Activated CD4-positive, alpha-beta memory T cell treated with anti-CD3 and anti-CD28 coated beads, Interleukin-2, amount 10 ng/mL, durations not matched to agents 7 days and 5 days (primary cell): ENCODE measurements at regions of chr20 and their contacts with region 1.

Region 1: DNA sequence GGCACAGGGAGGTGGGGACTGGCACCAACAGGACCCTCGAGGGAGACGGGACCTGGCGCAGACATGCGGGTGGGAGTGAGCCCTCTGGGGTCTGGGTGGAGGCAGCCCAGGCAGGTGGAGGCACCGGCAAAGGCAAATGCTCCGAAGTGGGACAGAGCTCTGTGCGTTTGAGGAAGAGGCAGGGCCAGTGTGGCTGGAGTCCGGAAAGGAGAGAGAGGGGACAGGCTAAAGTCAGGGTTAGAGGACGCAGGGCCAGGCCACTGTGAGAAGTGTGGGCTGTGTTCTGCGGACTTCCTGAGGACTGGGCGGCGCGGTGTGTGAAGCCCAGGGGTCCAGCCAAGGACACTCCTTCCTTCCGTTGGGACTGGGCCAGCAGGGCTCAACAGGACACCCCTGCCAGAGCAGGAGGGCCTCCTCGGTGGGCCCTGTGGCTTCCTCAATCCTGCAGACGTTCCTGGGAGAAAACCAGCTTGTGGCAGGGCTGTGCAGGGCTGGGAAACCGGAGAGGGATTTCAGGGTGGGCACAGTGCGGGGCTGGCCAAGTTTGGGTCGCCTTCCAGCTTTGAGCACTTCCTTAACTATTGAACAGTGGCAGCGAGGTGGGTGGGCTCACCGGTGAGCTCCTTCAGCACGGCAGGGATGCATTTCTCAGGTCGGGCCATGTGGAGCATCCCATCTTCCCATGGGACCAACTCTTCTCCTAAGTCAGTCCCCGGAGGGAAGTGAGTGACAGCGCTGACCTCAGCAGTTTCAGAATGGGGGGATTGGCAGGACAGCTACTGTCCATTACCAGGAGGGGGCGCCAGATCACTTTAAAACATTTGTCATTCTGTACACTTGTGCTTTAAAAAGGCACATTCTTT is 22.5 kb downstream of the MOCS3 start:
- DNase-seq: peak; percentile 66
- H3K4me3 Mint-ChIP-seq: no peak overlapping the region
- H3K27ac Mint-ChIP-seq: no peak overlapping the region
- H3K4me1 Mint-ChIP-seq: peaks cover 8% of the 10 kb centered on the region
- H3K27me3 Mint-ChIP-seq: peaks cover 22% of the 10 kb centered on the region

Region 2: DNA sequence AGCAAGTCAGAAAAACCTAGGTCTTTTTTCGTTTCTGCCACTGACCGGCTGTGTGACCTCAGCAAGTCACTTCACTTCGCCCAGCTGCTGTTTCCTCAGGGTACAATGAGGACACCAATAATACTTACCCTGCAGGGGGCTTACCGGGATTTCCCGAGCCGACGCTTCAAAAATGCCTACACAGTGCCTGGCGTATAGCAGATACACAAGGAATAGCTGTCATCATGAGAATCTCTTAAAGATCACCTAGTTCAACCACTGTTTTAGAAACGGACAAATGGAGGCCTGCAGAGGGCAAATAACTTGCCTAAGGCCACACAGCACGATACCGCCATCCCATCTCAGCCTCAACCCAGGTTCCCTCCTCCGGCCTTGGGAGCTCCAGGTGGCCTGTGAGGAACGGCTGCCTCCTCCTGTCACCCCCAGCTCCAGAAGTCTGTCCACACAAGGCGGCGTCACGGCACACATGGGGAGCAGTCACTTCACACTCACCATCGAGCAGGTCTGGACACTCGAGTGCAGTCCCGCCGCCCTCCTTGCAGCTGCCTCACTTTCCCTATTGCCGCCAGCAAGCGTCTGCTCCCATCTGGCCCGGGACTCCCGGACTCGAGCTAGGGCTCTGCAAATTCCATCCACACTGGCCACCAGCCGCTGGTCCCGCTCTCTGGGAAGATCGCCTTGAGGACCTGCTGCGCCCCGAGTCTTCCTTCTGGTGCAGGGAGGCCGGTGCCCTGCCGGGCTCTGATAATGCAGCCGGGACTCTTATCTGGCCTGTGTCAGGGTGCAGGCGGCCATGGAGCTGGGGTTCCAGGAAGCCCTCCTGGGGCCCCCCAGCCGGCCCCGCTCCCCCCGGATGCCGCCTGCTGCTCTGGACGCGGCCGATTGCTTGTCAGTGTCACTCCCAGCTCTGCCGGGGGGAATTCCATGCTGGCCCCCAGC is 290.2 kb before region 1 on chr20 and contains the start of gene RIPOR3:
- CTCF ChIA-PET with region 1: no interaction called
- POLR2A ChIA-PET with region 1: no interaction called
- DNase-seq: no peak
- H3K4me3 Mint-ChIP-seq: no peak within 1 kb of the TSS
- H3K27ac Mint-ChIP-seq: no peak within 1 kb of the TSS
- H3K4me1 Mint-ChIP-seq: peaks cover 7% of the 10 kb centered on the region
- H3K27me3 Mint-ChIP-seq: peaks cover 53% of the 10 kb centered on the region
- total RNA-seq, gene RIPOR3: not detected

Region 3: DNA sequence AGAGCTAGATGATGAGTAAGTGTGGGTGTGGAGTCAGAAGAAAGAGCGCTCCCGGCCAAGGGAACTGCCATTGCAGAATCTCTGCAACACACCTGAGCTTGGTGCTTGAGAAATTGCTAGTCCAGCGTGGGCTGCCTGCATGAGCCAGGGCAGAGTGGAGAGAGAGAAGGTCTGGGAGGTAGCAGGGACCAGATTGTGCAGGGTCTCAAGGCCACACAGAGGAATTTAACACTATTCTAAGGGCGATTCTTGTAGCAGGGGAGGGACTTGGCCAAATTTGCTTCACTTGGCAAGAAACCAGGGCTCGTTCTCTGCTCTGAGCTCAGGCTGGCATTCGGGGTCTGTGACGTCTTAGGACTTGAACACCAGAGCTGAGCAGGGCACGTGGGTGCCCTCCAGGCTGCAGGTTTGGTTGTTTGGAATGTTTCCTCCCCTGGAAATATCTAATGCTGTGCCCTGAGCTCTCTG is 132.7 kb before region 1 on chr20:
- CTCF ChIA-PET with region 1: no interaction called
- POLR2A ChIA-PET with region 1: no interaction called
- DNase-seq: no peak
- H3K4me3 Mint-ChIP-seq: no peak overlapping the region
- H3K27ac Mint-ChIP-seq: no peak overlapping the region
- H3K4me1 Mint-ChIP-seq: peaks cover 21% of the 10 kb centered on the region
- H3K27me3 Mint-ChIP-seq: no peaks in the 10 kb centered on the region

Region 4: GRCh38 chr20:50992733-50993457 is 11.8 kb after region 1 on chr20:
- CTCF ChIA-PET with region 1: interaction called, 19 read pairs
- POLR2A ChIA-PET with region 1: no interaction called
- DNase-seq: peak; percentile 51
- H3K4me3 Mint-ChIP-seq: no peak overlapping the region
- H3K27ac Mint-ChIP-seq: no peak overlapping the region
- H3K4me1 Mint-ChIP-seq: no peaks in the 10 kb centered on the region
- H3K27me3 Mint-ChIP-seq: peaks cover 4% of the 10 kb centered on the region

Region 5: GRCh38 chr20:51059862-51060261 is 78.8 kb after region 1 on chr20:
- CTCF ChIA-PET with region 1: no interaction called
- POLR2A ChIA-PET with region 1: no interaction called
- DNase-seq: no peak
- H3K4me3 Mint-ChIP-seq: no peak overlapping the region
- H3K27ac Mint-ChIP-seq: no peak overlapping the region
- H3K4me1 Mint-ChIP-seq: peaks cover 8% of the 10 kb centered on the region
- H3K27me3 Mint-ChIP-seq: peaks cover 30% of the 10 kb centered on the region

Region 6: DNA sequence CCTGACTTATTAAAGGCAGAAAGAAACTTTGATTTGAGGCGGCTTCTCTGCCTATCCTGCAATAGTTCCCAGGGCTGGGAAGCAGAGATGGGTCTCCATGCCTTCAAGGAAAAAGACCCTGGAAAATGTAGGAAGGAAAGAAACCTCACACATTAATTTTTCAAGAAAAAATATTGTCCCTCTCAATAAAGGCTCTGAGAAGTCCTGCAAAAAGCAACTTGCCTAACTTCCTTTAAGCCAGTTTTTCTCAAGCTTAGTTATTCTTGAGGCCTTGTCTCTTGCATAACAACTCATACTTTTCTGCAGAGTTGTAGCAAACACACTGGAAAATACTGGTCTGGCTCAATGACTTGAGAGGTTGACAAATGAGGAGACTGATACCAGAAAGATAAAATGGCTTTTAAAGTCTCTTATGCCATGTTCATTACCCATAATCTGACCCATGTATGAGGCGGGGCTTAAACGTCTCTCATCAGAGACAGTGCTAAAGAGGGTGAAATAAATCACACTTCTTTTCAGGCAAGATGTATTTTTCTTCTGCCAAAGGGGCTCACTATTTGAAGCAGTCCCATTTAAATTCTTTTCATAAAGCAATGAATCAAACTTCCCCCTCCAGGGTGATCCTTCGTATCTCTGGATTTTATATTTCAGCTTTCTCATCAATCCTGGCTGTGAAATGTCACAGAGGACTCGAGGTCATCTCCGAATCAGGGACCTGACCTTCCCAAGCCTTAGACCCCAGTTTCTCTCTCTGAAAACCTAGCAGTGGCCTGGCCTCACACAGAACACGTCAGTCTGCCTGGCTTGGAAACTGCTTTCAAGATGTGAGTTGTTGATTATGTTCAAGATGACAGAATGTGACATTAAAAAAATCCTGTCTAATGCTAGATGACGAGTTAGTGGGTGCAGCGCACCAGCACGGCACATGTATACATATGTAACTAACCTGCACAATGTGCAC is 124.2 kb after region 1 on chr20:
- CTCF ChIA-PET with region 1: no interaction called
- POLR2A ChIA-PET with region 1: no interaction called
- DNase-seq: no peak
- H3K4me3 Mint-ChIP-seq: no peak overlapping the region
- H3K27ac Mint-ChIP-seq: no peak overlapping the region
- H3K4me1 Mint-ChIP-seq: no peaks in the 10 kb centered on the region
- H3K27me3 Mint-ChIP-seq: peaks cover 16% of the 10 kb centered on the region